ENCODE measurements at regions of chr12 and their contacts with region 1.

Region 1: DNA sequence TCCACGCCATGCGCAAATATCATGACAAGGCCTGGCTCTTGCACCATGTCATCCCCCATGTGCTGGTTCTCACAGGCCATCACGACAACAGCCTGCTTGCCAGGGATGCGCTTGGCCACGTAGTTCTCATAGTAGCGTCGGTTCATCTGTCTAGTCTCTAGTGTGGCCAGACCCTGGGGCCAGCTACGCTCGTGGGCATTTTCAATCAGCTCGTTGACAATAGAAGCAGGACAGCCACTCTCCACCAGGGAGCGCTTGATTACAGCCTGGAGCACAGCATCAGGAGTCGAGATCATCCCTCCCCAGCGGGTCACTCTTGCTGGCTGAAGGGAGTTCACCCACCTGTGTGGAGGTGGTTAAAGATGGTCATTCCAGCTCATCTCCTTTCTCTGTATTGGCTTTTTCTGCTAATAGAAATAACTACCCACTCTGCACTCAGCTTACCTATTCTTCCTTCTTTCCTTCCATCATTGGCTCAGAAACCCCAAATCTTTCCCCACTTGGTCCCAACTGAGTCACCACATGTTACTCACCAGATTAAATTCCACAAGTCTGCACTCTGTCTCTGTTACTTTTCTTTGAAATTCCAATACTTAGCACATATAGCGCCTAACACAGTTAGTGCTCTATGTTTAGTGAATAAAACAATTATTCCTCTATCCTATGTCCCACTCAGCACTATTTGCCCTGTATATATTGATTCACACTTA is 15.1 kb downstream of the RNF41 start:
- DNase-seq: peak; percentile 72 to 77
- H3K4me3 ChIP-seq: no peak overlapping the region
- H3K4me3 Mint-ChIP-seq: no peak overlapping the region
- H3K27ac Mint-ChIP-seq: no peak overlapping the region
- H3K4me1 ChIP-seq: no peaks in the 10 kb centered on the region
- H3K4me1 Mint-ChIP-seq: no peaks in the 10 kb centered on the region
- H3K27me3 ChIP-seq: no peaks in the 10 kb centered on the region
- H3K27me3 Mint-ChIP-seq: no peaks in the 10 kb centered on the region
- CTCF ChIP-seq: peak; percentile 61 to 78

Region 2: GRCh38 chr12:56104109-56104814 is 102.3 kb before region 1 on chr12 and contains the start of gene PA2G4:
- CTCF ChIA-PET with region 1: no interaction called
- POLR2A ChIA-PET with region 1: no interaction called
- intact Hi-C with region 1: no loop called
- DNase-seq: peak; percentile 99
- H3K4me3 ChIP-seq: peak within 1 kb of the TSS; percentile 68
- H3K4me3 Mint-ChIP-seq: peak within 1 kb of the TSS; percentile 98
- H3K27ac Mint-ChIP-seq: peak within 1 kb of the TSS; percentile 99
- H3K4me1 ChIP-seq: peaks cover 22% of the 10 kb centered on the region
- H3K4me1 Mint-ChIP-seq: peaks cover 9% of the 10 kb centered on the region
- H3K27me3 ChIP-seq: no peaks in the 10 kb centered on the region; the same call in 1 of the 2 replicates
- H3K27me3 Mint-ChIP-seq: no peaks in the 10 kb centered on the region
- CTCF ChIP-seq: no peak
- total RNA-seq, gene PA2G4: 178 and 190 TPM in 2 replicates

Region 3: GRCh38 chr12:56658921-56659320 is 452.3 kb after region 1 on chr12:
- CTCF ChIA-PET with region 1: no interaction called
- POLR2A ChIA-PET with region 1: interaction called, 10 read pairs
- intact Hi-C with region 1: no loop called
- DNase-seq: no peak
- H3K4me3 ChIP-seq: no peak overlapping the region
- H3K4me3 Mint-ChIP-seq: no peak overlapping the region
- H3K27ac Mint-ChIP-seq: no peak overlapping the region
- H3K4me1 ChIP-seq: peaks cover 7% of the 10 kb centered on the region
- H3K4me1 Mint-ChIP-seq: peaks cover 7% of the 10 kb centered on the region
- H3K27me3 ChIP-seq: no peaks in the 10 kb centered on the region
- H3K27me3 Mint-ChIP-seq: no peaks in the 10 kb centered on the region
- CTCF ChIP-seq: no peak